Prostate gland (tissue), 2 donors: ENCODE measurements at regions of chr9 and their contacts with region 1.

Region 1: DNA sequence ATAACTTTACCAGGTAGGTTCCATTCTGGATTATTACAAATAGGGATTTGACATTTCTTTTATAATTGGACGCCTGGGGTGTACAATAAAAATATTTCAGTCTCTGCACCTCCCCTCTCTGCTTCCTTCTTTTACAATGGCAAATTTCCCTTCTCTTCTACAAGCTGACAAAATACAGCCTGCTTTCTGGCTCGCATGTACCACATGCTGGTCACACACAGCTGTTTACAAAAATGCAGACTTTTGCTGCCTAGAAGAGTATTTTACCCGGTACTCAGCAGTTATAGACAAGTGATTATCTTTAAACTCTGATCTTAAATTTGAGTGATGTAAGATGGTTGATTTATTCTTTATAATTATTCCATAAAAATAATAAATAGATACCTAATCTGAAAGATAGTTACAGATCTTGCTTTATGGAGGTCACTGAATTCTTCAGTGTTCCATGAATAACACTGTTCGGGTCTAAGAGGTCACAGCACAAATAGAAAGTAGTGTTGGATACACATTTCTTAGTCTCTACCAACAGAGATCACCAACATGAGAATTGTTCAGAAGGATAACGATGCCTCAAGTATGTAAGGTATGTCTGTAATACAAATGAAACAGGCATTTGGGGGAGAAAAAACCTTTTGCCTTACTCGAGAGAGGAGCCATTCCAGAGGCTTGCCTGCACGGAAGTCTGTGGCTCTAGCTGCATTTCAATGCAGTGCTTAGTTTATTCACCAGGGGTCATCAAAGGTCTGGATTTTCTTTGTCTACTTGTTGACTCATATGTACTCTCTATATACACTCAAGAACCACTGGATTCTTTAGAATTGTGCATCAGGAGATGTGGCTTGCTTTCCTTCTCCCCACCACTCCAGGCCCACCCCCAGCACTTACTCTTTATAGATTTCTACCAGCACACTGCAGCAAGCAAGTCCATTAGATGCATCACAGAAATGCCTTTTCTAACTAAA is 206.6 kb upstream of the RFX3 start:
- DNase-seq: peak; percentile 66
- H3K4me3 ChIP-seq: no peak overlapping the region
- H3K27ac ChIP-seq: peak overlapping the region in 1 of 2 donors; percentile 1
- H3K4me1 ChIP-seq: no peaks in the 10 kb centered on the region
- H3K27me3 ChIP-seq: no peaks in the 10 kb centered on the region
- CTCF ChIP-seq: peak; percentile 29 to 83 (median 72)
- POLR2A ChIP-seq: no peak

Region 2: GRCh38 chr9:3467593-3468219 is 264.7 kb before region 1 on chr9:
- intact Hi-C with region 1: loop called (anchors 10 kb)
- DNase-seq: peak; percentile 40
- H3K4me3 ChIP-seq: no peak overlapping the region
- H3K27ac ChIP-seq: no peak overlapping the region
- H3K4me1 ChIP-seq: no peaks in the 10 kb centered on the region
- H3K27me3 ChIP-seq: no peaks in the 10 kb centered on the region
- CTCF ChIP-seq: peak in 3 of 4 experiments; percentile 53 to 63 (median 62)
- POLR2A ChIP-seq: no peak

Region 3: DNA sequence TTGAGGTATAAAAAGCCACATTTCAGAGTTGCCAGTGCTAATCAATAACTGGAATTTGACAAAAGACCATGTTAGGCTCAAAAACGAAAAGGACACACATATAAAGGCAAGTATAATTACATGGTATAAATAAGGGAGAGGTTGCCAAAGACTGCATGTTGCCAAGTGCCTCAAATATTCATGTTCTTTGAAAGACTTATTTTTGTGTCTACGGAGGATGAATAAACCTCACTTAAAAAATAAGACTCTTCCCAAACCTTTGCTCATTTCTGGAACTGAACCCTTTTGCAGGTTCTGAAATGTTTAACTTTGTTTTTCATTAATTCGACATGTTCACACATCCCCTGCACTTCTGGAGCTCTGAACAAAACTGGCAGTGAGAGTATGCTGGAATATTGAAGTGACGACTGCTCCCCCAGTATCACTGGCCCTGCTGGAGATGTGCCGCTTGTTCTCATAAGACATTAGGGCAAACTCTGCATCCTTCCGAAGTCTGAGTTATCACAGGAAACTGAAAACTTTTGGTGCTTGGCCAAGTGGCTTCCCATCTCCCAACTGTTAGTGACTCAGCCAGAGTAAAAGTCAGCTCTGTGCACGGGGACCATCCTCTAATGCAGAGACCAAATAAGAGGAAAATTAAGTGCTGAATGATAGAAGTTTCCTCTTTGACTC is 230.7 kb after region 1 on chr9:
- intact Hi-C with region 1: no loop called
- DNase-seq: no peak
- H3K4me3 ChIP-seq: no peak overlapping the region
- H3K27ac ChIP-seq: no peak overlapping the region
- H3K4me1 ChIP-seq: no peaks in the 10 kb centered on the region
- H3K27me3 ChIP-seq: no peaks in the 10 kb centered on the region
- CTCF ChIP-seq: no peak
- POLR2A ChIP-seq: no peak

Region 4: GRCh38 chr9:4020038-4020754 is 287.8 kb after region 1 on chr9:
- intact Hi-C with region 1: no loop called
- DNase-seq: no peak
- H3K4me3 ChIP-seq: no peak overlapping the region
- H3K27ac ChIP-seq: no peak overlapping the region
- H3K4me1 ChIP-seq: no peaks in the 10 kb centered on the region
- H3K27me3 ChIP-seq: no peaks in the 10 kb centered on the region
- CTCF ChIP-seq: no peak
- POLR2A ChIP-seq: no peak

Region 5: DNA sequence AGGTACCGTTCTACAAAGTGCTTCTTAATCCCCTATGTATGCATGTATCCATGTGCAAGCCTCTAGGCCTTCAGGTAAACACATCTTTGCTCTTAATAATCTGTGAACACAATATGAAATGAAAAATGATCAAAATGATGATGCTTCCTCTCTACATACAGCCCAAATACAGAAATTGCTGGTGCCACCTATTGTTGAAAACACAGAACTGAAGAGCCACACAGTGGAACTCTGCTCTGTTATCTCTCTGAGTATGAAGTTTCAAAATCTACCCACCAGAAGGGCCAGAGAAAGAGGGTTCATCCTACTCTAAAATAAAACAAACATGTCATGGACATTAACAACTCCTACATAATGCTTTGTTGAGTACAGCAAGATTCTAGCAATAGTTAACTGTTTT is 496.2 kb after region 1 on chr9:
- intact Hi-C with region 1: loop called (anchors 5 kb)
- DNase-seq: no peak
- H3K4me3 ChIP-seq: no peak overlapping the region
- H3K27ac ChIP-seq: no peak overlapping the region
- H3K4me1 ChIP-seq: no peaks in the 10 kb centered on the region
- H3K27me3 ChIP-seq: no peaks in the 10 kb centered on the region
- CTCF ChIP-seq: peak in 3 of 4 experiments; percentile 22 to 56 (median 41)
- POLR2A ChIP-seq: no peak

Region 6: DNA sequence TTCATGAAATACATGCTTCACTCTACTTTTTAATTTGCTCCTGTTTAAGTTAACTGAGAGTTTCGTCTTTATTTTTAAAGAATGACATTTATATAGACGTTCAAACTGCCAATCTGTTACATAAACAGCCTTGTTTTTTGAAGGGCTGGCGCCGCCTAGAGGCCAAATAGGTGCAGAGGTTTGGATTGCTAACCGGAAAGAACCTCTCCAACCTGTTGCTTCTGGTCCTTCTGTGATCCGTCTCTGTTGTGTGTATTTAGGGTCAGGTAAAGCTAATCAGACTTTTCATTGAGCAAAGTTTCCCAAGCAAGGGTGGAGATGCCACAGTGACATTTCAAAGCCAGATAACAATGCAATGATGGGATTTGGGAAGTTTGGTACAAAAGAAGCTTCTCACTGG is 607.0 kb after region 1 on chr9:
- intact Hi-C with region 1: loop called (anchors 5 kb)
- DNase-seq: peak; percentile 86
- H3K4me3 ChIP-seq: no peak overlapping the region
- H3K27ac ChIP-seq: no peak overlapping the region
- H3K4me1 ChIP-seq: no peaks in the 10 kb centered on the region
- H3K27me3 ChIP-seq: no peaks in the 10 kb centered on the region
- CTCF ChIP-seq: peak; percentile 86 to 91 (median 89)
- POLR2A ChIP-seq: no peak

Region 7: DNA sequence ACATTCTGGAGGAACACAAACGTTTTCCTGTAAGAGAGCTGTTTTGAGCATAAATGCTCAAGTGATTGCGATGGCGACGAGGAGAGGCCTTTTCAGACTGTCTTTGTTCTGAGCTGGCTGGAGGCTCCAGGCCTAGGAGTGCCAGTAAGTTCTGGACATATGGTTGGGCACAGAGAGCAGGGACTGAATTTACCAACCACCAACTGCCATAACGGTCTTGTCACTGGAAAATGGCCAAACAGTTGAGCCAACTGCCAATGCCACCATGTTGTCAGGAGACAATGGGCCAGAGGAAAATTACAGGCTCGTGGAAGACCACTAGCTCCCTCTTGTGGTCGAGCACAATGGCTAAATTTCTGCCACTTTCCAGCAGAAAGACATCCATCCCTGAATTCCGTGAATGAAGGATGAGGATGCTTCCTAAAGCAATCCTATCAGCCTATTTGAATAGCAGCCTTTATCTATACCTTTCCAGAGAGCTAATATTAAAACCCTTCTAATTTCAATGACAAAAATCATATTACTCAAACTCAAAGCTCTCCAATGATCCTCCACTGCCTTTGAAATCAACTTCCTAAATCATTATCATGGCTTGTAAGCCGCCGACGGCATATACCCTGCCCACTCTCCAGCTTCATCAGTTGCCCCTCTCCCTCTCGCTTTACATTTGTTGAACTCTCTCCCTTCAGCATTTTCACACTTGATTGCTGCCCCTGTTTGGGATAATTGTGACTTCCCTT is 634.4 kb after region 1 on chr9:
- intact Hi-C with region 1: loop called (anchors 10 kb)
- DNase-seq: no peak
- H3K4me3 ChIP-seq: no peak overlapping the region
- H3K27ac ChIP-seq: no peak overlapping the region
- H3K4me1 ChIP-seq: no peaks in the 10 kb centered on the region
- H3K27me3 ChIP-seq: no peaks in the 10 kb centered on the region
- CTCF ChIP-seq: peak in 3 of 4 experiments; percentile 54 to 59 (median 55)
- POLR2A ChIP-seq: no peak